Activated CD4-positive, alpha-beta memory T cell treated with anti-CD3 and anti-CD28 coated beads for 36 hours (primary cell): ENCODE measurements at regions of chr5 and their contacts with region 1.

Region 1: DNA sequence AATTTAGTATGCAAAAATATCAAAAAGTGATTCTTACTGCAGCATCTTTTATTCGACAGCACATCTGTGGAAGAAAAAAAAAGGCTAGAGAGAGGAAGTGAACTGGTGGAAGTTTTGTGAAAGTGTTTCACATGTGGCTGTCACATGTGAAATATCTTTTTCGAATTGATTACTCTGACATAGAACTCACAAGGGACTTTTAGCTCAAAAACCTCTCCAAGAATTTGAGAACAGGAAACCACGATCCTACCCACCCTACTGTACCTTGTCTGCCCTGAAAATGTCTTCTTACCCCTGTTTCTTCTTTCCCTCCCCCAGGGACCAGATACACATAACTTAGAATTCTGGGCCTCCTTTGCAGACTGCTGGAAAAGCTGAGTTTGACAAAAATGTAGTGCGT is 106.5 kb upstream of the PRRC1 start:
- DNase-seq: no peak
- H3K4me3 Mint-ChIP-seq: no peak overlapping the region
- H3K27ac Mint-ChIP-seq: no peak overlapping the region
- H3K4me1 Mint-ChIP-seq: peaks cover 2% of the 10 kb centered on the region
- H3K27me3 Mint-ChIP-seq: peaks cover 2% of the 10 kb centered on the region

Region 2: GRCh38 chr5:127335381-127335780 is 75.6 kb before region 1 on chr5:
- CTCF ChIA-PET with region 1: no interaction called
- POLR2A ChIA-PET with region 1: no interaction called
- intact Hi-C with region 1: no loop called
- DNase-seq: no peak
- H3K4me3 Mint-ChIP-seq: no peak overlapping the region
- H3K27ac Mint-ChIP-seq: no peak overlapping the region
- H3K4me1 Mint-ChIP-seq: no peaks in the 10 kb centered on the region
- H3K27me3 Mint-ChIP-seq: peaks cover 22% of the 10 kb centered on the region

Region 3: GRCh38 chr5:127358740-127359139 is 52.2 kb before region 1 on chr5:
- CTCF ChIA-PET with region 1: no interaction called
- POLR2A ChIA-PET with region 1: no interaction called
- intact Hi-C with region 1: no loop called
- DNase-seq: no peak
- H3K4me3 Mint-ChIP-seq: no peak overlapping the region
- H3K27ac Mint-ChIP-seq: no peak overlapping the region
- H3K4me1 Mint-ChIP-seq: no peaks in the 10 kb centered on the region
- H3K27me3 Mint-ChIP-seq: peaks cover 8% of the 10 kb centered on the region

Region 4: GRCh38 chr5:127386557-127386956 is 24.4 kb before region 1 on chr5:
- CTCF ChIA-PET with region 1: no interaction called
- POLR2A ChIA-PET with region 1: no interaction called
- intact Hi-C with region 1: no loop called
- DNase-seq: no peak
- H3K4me3 Mint-ChIP-seq: no peak overlapping the region
- H3K27ac Mint-ChIP-seq: no peak overlapping the region
- H3K4me1 Mint-ChIP-seq: no peaks in the 10 kb centered on the region
- H3K27me3 Mint-ChIP-seq: no peaks in the 10 kb centered on the region

Region 5: DNA sequence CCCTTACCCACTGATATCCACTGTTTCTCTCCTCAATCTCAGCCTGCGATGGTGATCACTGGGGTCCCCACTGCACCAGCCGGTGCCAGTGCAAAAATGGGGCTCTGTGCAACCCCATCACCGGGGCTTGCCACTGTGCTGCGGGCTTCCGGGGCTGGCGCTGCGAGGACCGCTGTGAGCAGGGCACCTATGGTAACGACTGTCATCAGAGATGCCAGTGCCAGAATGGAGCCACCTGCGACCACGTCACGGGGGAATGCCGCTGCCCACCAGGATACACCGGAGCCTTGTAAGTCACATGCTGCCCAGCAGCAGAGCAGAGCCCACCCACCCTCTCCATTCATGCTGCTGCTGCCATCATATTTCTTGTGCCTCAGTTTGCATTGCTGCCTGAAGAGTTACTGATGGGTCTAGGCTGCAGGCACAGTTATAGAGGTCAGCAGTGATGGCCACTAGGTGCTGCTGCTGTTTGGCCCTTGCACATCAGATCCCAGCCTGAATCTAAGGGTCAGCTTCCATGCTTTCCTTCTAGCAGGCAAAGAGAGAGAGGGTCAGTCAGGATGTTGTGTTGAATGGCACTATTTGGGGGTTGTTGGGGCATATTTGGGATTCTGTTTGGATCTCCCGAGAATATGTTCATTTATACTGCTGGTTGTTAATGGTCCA is 14.3 kb before region 1 on chr5:
- CTCF ChIA-PET with region 1: no interaction called
- POLR2A ChIA-PET with region 1: no interaction called
- intact Hi-C with region 1: loop called (anchors 1 kb)
- DNase-seq: no peak
- H3K4me3 Mint-ChIP-seq: no peak overlapping the region
- H3K27ac Mint-ChIP-seq: no peak overlapping the region
- H3K4me1 Mint-ChIP-seq: no peaks in the 10 kb centered on the region
- H3K27me3 Mint-ChIP-seq: peaks cover 5% of the 10 kb centered on the region

Region 6: GRCh38 chr5:127529904-127530682 is 119.1 kb after region 1 on chr5:
- CTCF ChIA-PET with region 1: no interaction called
- POLR2A ChIA-PET with region 1: no interaction called
- intact Hi-C with region 1: no loop called
- DNase-seq: no peak
- H3K4me3 Mint-ChIP-seq: no peak overlapping the region
- H3K27ac Mint-ChIP-seq: no peak overlapping the region
- H3K4me1 Mint-ChIP-seq: no peaks in the 10 kb centered on the region
- H3K27me3 Mint-ChIP-seq: no peaks in the 10 kb centered on the region